PC-9 (cell line): ENCODE measurements at regions of chr16 and their contacts with region 1.

Region 1: GRCh38 chr16:24988593-24989338 is 26.4 kb downstream of the ARHGAP17 start:
- DNase-seq: peak; percentile 82 to 91
- H3K4me3 ChIP-seq: peak overlapping the region; percentile 36; the same call in 1 of the 2 replicates
- H3K27ac ChIP-seq: peak overlapping the region; percentile 63; the same call in 1 of the 2 replicates
- H3K4me1 ChIP-seq: peaks cover 48% of the 10 kb centered on the region
- H3K27me3 ChIP-seq: no peaks in the 10 kb centered on the region
- CTCF ChIP-seq: no peak

Region 2: DNA sequence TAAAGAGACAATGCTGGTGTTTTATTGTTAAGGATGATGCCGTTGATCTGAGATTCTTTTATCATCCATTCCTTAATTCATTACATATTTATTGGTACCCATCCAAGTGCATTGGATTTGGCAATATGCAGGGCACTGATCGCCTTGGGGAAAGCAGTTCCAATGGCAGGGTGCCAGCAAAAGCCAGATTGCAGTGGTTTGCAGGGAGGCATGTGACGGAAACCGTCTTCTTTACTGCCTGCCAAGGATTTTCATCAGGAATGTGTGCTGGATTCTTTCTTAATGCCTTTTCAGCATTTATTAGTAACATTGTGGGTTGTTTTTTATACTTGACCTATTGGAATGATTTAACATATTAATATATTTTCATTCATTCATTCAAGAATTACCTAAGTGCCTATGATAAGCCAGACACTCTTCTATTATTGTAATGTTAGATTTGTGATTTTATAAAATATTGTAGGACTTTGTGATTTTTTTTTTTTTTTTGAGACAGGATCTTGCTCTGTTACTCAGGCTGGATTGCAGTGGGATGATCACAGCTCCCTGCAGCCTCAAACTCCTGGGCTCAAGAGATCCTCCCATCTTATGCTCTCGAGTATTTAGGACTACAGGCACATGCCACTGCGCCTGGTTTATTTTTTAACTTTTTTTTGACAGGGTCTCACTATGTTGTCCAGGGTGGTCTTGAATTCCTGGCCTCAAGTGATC is 352.7 kb before region 1 on chr16:
- CTCF ChIA-PET with region 1: no interaction called
- POLR2A ChIA-PET with region 1: no interaction called
- intact Hi-C with region 1: loop called (anchors 10 kb)
- DNase-seq: peak; percentile 86 to 91
- H3K4me3 ChIP-seq: no peak overlapping the region
- H3K27ac ChIP-seq: peak overlapping the region; percentile 45; the same call in 1 of the 2 replicates
- H3K4me1 ChIP-seq: peaks cover 18% of the 10 kb centered on the region
- H3K27me3 ChIP-seq: no peaks in the 10 kb centered on the region
- CTCF ChIP-seq: no peak

Region 3: DNA sequence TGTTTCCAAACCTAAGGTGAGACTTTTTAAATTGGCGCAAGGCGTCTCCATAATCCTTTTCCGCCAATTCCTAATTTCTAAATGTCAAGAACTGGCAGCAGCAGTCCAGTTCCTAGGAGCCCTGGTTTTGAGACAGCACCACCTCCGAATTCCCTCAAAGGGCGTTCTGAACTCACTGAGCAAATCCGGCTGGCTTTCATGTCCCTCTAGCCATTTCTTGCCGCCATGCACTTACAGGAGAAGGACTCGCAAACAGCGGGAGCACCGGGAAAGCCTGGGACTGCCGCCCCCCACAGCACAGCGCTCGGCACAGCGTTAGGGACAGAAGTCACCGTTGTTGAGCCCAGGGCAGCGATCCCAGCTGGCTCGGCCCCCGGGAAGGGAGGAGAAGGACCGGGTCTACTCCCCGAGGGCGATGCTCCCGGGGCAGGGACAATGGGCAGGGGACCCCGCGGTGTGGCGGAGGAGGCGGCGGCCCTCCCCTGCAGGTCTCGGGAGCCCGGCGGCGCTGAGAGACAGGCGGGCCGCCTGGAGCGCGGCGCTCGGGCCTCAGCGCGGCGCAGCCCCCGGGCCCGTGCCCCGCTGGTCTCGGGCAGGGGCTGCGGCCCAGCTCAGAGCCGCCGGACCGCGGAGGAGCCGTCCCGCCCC is 25.9 kb after region 1 on chr16:
- CTCF ChIA-PET with region 1: interaction called, 3 read pairs
- POLR2A ChIA-PET with region 1: interaction called, 16 read pairs
- intact Hi-C with region 1: loop called (anchors 2 kb)
- DNase-seq: peak; percentile 33 to 46
- H3K4me3 ChIP-seq: peak overlapping the region; percentile 95
- H3K27ac ChIP-seq: peak overlapping the region; percentile 52
- H3K4me1 ChIP-seq: peaks cover 26% of the 10 kb centered on the region
- H3K27me3 ChIP-seq: no peaks in the 10 kb centered on the region
- CTCF ChIP-seq: no peak

Region 4: DNA sequence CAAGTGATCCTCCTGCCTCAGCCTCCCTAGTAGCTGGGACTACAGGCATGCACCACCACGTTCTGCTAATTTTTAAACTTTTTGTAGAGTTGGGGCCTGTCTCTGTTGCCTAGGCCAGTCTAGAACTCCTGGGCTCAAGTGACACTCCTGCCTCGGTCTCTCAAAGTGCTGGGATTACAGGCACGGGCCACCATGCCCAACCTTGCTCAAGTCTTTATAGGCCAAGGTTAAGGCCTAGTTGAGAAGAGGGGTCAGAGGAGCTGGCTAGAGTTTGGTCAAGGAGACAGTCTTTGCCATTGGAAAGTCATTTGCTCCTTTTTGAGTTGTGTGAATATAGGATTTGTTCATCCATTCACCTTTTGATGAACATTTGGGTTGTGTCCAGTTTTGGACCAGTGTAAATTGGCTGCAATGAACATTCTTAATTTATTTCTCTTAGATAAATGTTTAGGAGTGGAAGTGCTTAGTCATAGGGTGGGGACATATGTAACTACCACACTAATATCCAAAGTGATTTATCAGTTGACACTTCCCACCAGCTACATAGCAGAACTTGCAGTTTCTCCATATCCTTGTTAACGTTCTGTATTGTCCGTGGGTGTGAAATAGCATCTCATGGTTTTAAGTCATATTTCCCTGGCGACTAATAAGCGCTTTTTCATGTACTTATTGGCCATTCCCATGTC is 57.1 kb after region 1 on chr16:
- CTCF ChIA-PET with region 1: interaction called, 6 read pairs
- POLR2A ChIA-PET with region 1: interaction called, 11 read pairs
- intact Hi-C with region 1: loop called (anchors 2 kb)
- DNase-seq: no peak
- H3K4me3 ChIP-seq: no peak overlapping the region
- H3K27ac ChIP-seq: no peak overlapping the region
- H3K4me1 ChIP-seq: peaks cover 39% of the 10 kb centered on the region
- H3K27me3 ChIP-seq: no peaks in the 10 kb centered on the region
- CTCF ChIP-seq: no peak

Region 5: DNA sequence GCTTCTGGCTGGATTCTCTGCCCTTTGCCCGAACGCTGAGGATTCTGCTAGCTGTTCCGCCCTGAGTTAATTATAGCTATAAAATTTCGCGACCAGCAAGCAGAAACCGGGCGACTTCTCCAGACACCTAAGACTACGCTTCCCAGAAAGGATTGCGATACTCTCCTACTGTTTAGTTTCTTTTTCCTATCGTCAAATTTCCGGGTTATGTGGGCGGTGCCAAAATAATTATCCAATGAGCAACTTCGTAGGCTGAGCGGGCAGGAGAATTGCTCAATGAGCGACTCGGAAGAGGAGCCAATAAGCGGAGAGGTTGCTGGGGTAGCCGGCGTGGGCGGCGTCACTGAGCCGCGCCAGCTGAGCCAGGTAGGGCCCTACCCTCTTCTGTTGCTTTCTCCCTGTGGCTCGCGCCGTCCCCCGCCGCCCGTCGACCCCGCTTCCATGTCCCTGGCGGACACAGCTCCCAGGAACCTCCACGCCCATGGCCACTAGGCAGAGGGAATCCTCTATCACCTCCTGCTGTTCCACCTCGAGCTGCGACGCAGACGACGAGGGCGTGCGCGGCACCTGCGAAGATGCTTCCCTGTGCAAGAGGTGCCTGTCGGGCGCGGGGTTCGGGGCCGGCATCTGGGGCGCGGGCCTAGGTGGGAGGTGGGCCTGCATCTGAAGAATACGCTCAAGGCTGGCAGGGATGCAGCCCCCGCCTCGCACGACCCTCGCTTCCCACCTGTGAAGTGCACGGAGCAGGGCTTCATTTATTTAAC is 122.8 kb after region 1 on chr16 and contains the start of gene LCMT1:
- CTCF ChIA-PET with region 1: no interaction called
- POLR2A ChIA-PET with region 1: no interaction called
- intact Hi-C with region 1: loop called (anchors 5 kb)
- DNase-seq: peak; percentile 92 to 96
- H3K4me3 ChIP-seq: peak within 1 kb of the TSS; percentile 74
- H3K27ac ChIP-seq: peak within 1 kb of the TSS; percentile 82
- H3K4me1 ChIP-seq: peaks cover 29% of the 10 kb centered on the region
- H3K27me3 ChIP-seq: no peaks in the 10 kb centered on the region
- CTCF ChIP-seq: no peak
- total RNA-seq, gene LCMT1: 67.1 and 113 TPM in 2 replicates